Gastrocnemius medialis (tissue), 4 donors: ENCODE measurements at regions of chr1 and their contacts with region 1.

Region 1: DNA sequence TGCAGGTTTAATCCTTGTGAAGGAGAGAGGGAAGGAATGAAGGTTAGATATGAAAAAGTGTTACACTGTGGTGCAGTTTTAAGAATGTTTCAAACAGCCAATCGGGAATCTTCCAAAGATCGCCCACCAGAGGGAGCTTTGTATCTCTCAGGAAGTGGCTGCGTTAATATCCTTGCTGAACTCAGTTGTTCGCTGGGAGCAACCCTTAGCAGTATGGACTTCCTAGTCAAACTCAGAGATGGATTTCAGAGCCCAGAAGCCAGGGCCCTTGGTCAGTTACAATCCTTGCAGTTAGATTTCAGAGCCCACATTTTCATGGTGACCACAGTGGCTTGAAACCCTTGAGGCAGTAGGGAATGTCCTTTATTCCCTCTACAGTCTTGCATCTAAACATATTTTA is 136.2 kb downstream of the NTNG1 start:
- DNase-seq: peak in 1 of 2 donors; percentile 2
- ATAC-seq: no peak
- H3K4me3 ChIP-seq: no peak overlapping the region
- H3K27ac ChIP-seq: no peak overlapping the region
- H3K4me1 ChIP-seq: no peaks in the 10 kb centered on the region
- H3K27me3 ChIP-seq: no peaks in the 10 kb centered on the region
- CTCF ChIP-seq: peak in 2 of 5 experiments; percentile 15 to 22
- POLR2A ChIP-seq: no peak

Region 2: DNA sequence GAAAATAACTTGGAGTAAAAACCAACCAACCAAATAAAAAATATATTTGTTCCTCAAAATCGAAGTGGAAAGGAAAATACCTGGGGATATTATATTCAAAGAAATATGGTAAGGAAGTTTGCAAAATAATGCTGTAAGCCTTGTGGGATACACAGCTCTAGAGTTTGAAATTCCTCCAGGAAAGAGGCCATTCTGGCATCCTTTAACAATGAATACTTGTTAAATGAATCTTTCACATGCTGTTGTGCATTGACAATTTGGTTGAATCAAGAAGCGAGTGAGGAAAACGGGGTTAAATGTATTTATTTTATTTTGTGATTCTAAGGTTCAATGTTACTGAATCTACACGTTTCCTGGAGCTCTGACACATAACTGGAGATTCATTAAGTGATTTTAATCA is 166.7 kb before region 1 on chr1:
- in situ Hi-C with region 1: no loop called
- intact Hi-C with region 1: no loop called
- DNase-seq: no peak
- ATAC-seq: no peak
- H3K4me3 ChIP-seq: no peak overlapping the region
- H3K27ac ChIP-seq: no peak overlapping the region
- H3K4me1 ChIP-seq: no peaks in the 10 kb centered on the region
- H3K27me3 ChIP-seq: no peaks in the 10 kb centered on the region
- CTCF ChIP-seq: no peak
- POLR2A ChIP-seq: no peak

Region 3: DNA sequence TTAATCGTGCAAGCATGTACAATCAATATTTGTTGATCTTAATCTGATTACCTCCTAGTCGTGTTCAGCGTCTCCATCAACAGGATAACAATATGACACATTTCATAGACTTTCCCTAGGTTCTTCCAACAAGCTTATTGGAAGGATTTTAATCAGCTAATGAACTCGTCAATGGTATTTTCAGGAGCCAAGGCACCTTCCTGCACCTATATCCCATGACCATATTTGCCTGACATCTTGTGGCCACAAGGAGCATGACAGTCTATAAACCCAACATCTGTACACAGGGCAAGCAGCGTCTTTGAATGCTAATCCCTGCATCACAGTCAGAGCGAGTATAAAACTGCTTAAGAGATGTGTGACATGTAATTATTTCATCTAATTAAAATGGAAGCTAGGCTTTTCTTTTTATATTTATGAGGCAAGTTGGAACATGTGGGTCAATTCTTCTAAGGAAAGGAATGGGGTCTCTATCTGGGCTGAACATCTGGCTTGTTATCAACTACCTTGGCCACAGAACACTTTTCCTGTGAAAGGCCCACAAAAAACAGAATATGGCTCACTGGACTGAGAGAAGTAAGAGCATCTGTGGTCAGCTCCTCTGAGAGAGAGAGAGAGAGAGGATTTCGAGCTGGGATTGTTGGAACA is 252.6 kb after region 1 on chr1:
- in situ Hi-C with region 1: loop called in 2 of 4 experiments (anchors 25 kb)
- intact Hi-C with region 1: loop called (anchors 5 kb)
- DNase-seq: no peak
- ATAC-seq: peak in 1 of 2 donors; percentile 64
- H3K4me3 ChIP-seq: no peak overlapping the region
- H3K27ac ChIP-seq: no peak overlapping the region
- H3K4me1 ChIP-seq: no peaks in the 10 kb centered on the region
- H3K27me3 ChIP-seq: no peaks in the 10 kb centered on the region
- CTCF ChIP-seq: peak; percentile 30 to 59 (median 52)
- POLR2A ChIP-seq: no peak